ENCODE measurements at regions of chr1 and their contacts with region 1.

Region 1: GRCh38 chr1:156383023-156383422 is 14.0 kb downstream of the RHBG start:
- DNase-seq: peak; percentile 80
- H3K4me3 Mint-ChIP-seq: no peak overlapping the region
- H3K27ac Mint-ChIP-seq: no peak overlapping the region
- H3K4me1 Mint-ChIP-seq: peaks cover 11% of the 10 kb centered on the region
- H3K27me3 Mint-ChIP-seq: no peaks in the 10 kb centered on the region
- CTCF ChIP-seq: peak; percentile 94

Region 2: DNA sequence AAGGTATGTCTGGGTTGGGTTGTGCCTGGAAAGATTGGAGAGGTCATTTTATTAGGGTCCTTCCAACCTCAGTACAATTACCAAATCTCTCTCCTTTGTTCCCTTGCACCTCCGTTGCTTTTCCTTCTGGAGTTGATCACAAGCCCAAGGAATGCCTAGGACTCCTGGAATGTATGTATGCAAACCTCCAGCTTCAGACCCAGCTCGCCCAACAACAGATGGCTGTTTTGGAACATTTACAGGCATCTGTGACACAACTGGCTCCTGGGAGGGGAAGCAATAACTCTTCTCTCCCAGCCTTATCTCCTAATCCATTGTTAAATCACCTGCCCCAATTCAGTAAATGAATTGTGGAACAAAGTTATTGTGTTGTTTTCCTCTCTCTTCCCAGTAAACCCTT is 36.4 kb before region 1 on chr1:
- CTCF ChIA-PET with region 1: interaction called, 50 read pairs
- POLR2A ChIA-PET with region 1: no interaction called
- intact Hi-C with region 1: no loop called
- DNase-seq: no peak
- H3K4me3 Mint-ChIP-seq: no peak overlapping the region
- H3K27ac Mint-ChIP-seq: no peak overlapping the region
- H3K4me1 Mint-ChIP-seq: no peaks in the 10 kb centered on the region
- H3K27me3 Mint-ChIP-seq: no peaks in the 10 kb centered on the region
- CTCF ChIP-seq: no peak

Region 3: GRCh38 chr1:156407344-156407743 is 24.3 kb after region 1 on chr1:
- CTCF ChIA-PET with region 1: interaction called, 66 read pairs
- POLR2A ChIA-PET with region 1: no interaction called
- intact Hi-C with region 1: no loop called
- DNase-seq: no peak
- H3K4me3 Mint-ChIP-seq: no peak overlapping the region
- H3K27ac Mint-ChIP-seq: no peak overlapping the region
- H3K4me1 Mint-ChIP-seq: no peaks in the 10 kb centered on the region
- H3K27me3 Mint-ChIP-seq: peaks cover 93% of the 10 kb centered on the region
- CTCF ChIP-seq: no peak

Region 4: DNA sequence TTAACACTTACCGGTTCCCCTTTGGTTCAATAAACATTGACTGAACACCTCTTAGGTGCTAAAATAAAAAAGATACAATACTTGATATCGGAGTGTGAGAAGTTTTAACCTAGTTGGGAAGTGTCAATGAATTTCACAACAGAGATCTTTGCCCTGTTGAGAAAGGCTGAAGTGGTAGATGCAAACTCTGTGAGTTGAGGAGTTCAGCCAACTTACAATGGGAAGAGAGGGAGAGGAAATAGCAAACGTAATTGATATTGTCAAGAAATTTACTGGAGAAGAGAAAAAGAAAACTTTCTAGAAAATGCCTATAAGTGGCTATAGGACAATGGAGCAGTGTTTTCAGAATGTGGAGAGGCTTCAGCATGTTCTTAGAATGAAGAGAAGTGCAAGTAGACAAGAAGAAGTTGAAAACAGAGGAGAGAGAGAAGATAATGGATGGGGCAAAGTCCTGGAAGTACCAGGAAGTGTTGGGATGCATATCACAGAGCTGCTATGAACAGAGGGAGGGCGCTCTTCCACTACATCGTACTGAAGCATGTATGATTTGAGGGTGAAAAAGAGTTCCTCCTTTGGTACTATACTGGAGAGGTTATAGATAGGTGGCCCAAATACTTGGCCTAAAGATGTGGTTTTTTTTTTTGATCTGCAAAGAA is 68.6 kb after region 1 on chr1:
- CTCF ChIA-PET with region 1: interaction called, 452 read pairs
- POLR2A ChIA-PET with region 1: interaction called, 13 read pairs
- intact Hi-C with region 1: no loop called
- DNase-seq: no peak
- H3K4me3 Mint-ChIP-seq: no peak overlapping the region
- H3K27ac Mint-ChIP-seq: no peak overlapping the region
- H3K4me1 Mint-ChIP-seq: peaks cover 6% of the 10 kb centered on the region
- H3K27me3 Mint-ChIP-seq: peaks cover 9% of the 10 kb centered on the region
- CTCF ChIP-seq: no peak

Region 5: GRCh38 chr1:156601122-156601830 is 218.3 kb after region 1 on chr1 and contains the start of gene GPATCH4:
- CTCF ChIA-PET with region 1: interaction called, 56 read pairs
- POLR2A ChIA-PET with region 1: no interaction called
- intact Hi-C with region 1: no loop called
- DNase-seq: peak; percentile 94
- H3K4me3 Mint-ChIP-seq: peak within 1 kb of the TSS; percentile 86
- H3K27ac Mint-ChIP-seq: peak within 1 kb of the TSS; percentile 94
- H3K4me1 Mint-ChIP-seq: peaks cover 18% of the 10 kb centered on the region
- H3K27me3 Mint-ChIP-seq: no peaks in the 10 kb centered on the region
- CTCF ChIP-seq: no peak
- total RNA-seq, gene GPATCH4: 67.3 and 107 TPM in 2 replicates

Region 6: DNA sequence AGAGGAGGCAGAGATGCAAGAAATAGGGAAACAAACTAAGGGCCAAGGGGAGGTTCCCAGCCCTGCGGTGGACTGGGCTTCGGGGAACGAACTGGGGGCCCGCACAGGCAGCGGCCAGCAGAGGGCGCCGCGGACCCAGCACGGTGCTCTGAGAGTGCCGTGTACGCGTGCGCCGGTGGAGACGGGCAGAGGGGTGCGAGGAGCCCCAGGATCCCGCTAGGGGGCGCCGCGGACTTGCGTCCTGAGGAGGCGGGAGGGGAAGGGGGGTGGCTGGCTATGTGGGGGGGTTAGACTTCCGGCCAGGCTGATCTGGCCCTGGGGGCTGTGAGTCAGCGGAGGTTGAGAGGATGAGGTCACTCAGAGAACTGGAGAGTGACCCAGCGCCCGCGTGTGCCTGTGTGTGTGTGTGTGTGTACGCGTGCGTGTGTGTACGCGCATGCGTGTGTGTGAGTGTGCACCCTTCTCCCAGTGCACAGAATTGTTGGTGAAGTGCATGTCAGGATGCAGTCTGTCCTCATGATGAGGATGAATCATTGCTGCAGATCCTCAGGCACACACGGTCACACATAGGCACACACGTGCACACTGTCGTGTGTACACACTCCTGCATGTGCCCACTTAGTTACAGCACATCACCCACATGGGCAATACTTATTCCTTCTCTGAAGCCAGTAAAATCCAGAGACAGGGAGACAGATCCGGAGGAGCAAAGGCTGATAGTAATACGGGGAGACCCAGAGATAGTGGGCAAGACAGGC is 277.1 kb after region 1 on chr1:
- CTCF ChIA-PET with region 1: interaction called, 12 read pairs
- POLR2A ChIA-PET with region 1: no interaction called
- intact Hi-C with region 1: no loop called
- DNase-seq: peak; percentile 99
- H3K4me3 Mint-ChIP-seq: peak overlapping the region; percentile 87
- H3K27ac Mint-ChIP-seq: peak overlapping the region; percentile 83
- H3K4me1 Mint-ChIP-seq: peaks cover 49% of the 10 kb centered on the region
- H3K27me3 Mint-ChIP-seq: no peaks in the 10 kb centered on the region
- CTCF ChIP-seq: peak; percentile 98

Measured in MCF 10A (cell line).